ENCODE measurements at regions of chr1 and their contacts with region 1.

Region 1: DNA sequence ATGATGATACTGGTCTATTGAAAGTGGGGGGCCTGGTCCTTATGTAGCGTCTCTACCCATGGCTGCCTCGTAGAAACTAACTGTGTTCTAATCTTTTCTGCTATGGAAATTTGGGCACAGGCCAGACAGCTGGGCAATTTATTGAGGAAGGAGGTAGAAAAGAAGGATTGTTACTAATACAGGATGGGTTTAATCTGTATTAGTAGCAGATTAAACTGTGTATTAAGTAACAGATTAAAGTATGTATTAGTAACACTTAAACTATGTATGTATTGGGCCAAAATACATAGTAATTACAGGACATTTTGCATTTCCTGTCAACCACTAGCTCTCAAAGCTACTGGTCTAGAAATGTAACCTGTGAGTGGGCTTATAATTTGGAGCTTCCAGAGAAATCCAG is 142.0 kb downstream of the MAST2 start:
- DNase-seq: peak in 1 of 2 donors; percentile 62
- ATAC-seq: no peak
- H3K4me3 ChIP-seq: no peak overlapping the region
- H3K27ac ChIP-seq: peak overlapping the region in 1 of 2 donors; percentile 67
- H3K4me1 ChIP-seq: peaks cover 0 to 5% of the 10 kb centered on the region in 2 donors
- H3K27me3 ChIP-seq: no peaks in the 10 kb centered on the region

Region 2: DNA sequence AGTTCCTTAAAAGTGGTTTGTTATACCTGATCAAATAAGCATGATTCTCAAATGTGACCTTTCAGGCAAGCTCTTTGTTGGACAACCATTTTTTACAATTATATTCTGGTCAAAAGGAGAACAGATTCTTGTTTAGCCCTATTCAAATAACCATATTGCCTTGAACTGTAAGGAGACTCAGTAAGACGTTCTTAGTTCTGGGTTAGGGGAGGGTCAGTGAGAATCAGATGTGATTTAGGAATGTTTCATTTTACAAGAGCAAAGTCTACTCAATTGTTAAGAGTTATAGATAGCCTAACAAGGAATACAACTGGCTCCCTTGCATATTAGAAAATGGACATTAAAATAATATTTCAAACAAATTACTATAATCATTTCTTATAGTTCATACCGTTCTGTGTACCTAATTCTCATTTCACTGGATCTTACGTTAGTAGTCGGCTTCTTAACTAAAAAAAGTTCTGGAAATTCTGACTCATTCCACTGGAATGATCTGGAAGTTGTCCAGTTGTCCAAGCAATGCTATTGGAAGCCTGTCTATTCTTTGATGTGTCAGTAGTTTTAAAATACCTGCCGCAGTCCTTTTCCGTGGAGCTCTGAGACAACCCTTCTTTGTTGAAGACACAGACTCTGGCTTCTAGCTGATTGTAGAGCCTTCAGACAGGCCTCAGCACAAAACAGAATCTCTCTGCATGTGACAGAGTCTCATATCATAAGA is 53.2 kb before region 1 on chr1:
- intact Hi-C with region 1: loop called in 1 of 2 experiments (anchors 10 kb)
- DNase-seq: no peak
- ATAC-seq: peak; percentile 54
- H3K4me3 ChIP-seq: no peak overlapping the region
- H3K27ac ChIP-seq: peak overlapping the region; percentile 74 to 82
- H3K4me1 ChIP-seq: peaks cover 0 to 3% of the 10 kb centered on the region in 2 donors
- H3K27me3 ChIP-seq: no peaks in the 10 kb centered on the region

Measured in aorta (tissue), 5 donors.